Left ventricle myocardium inferior (tissue), 1 donor: ENCODE measurements at regions of chr10 and their contacts with region 1.

Region 1: GRCh38 chr10:5442065-5442989 is 30.0 kb downstream of the NET1 start:
- DNase-seq: no peak
- H3K4me3 ChIP-seq: no peak overlapping the region
- H3K27ac ChIP-seq: no peak overlapping the region
- H3K4me1 ChIP-seq: peaks cover 9% of the 10 kb centered on the region
- H3K27me3 ChIP-seq: no peaks in the 10 kb centered on the region
- CTCF ChIP-seq: peak; percentile 84

Region 2: DNA sequence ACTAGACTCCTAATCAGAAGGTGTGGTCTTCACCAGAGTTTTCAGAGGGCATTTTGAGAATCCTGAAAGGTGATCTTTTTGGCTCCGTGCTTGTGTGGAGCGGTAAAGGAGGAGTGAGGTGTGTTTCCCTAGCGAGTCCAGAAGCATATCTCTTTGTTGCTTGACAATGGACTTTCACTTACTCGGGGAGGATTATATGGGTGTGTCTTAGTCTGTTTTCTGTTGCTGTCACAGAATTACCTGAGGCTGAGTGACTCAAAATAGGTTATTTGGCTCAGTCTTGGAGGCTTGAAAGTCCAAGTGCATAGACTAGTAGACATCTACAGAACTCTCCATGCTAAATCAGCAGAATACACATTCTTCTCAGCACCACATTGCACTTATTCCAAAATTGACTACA is 187.8 kb before region 1 on chr10:
- intact Hi-C with region 1: no loop called
- DNase-seq: no peak
- H3K4me3 ChIP-seq: no peak overlapping the region
- H3K27ac ChIP-seq: no peak overlapping the region
- H3K4me1 ChIP-seq: no peaks in the 10 kb centered on the region
- H3K27me3 ChIP-seq: peaks cover 7% of the 10 kb centered on the region
- CTCF ChIP-seq: no peak

Region 3: GRCh38 chr10:5364890-5365338 is 77.4 kb before region 1 on chr10 and contains the start of gene UCN3:
- intact Hi-C with region 1: no loop called
- DNase-seq: no peak
- H3K4me3 ChIP-seq: no peak within 1 kb of the TSS
- H3K27ac ChIP-seq: no peak within 1 kb of the TSS
- H3K4me1 ChIP-seq: no peaks in the 10 kb centered on the region
- H3K27me3 ChIP-seq: peaks cover 65% of the 10 kb centered on the region
- CTCF ChIP-seq: no peak
- total RNA-seq, gene UCN3: not detected

Region 4: GRCh38 chr10:5525561-5526341 is 83.4 kb after region 1 on chr10:
- intact Hi-C with region 1: no loop called
- DNase-seq: no peak
- H3K4me3 ChIP-seq: no peak overlapping the region
- H3K27ac ChIP-seq: no peak overlapping the region
- H3K4me1 ChIP-seq: no peaks in the 10 kb centered on the region
- H3K27me3 ChIP-seq: no peaks in the 10 kb centered on the region
- CTCF ChIP-seq: no peak

Region 5: DNA sequence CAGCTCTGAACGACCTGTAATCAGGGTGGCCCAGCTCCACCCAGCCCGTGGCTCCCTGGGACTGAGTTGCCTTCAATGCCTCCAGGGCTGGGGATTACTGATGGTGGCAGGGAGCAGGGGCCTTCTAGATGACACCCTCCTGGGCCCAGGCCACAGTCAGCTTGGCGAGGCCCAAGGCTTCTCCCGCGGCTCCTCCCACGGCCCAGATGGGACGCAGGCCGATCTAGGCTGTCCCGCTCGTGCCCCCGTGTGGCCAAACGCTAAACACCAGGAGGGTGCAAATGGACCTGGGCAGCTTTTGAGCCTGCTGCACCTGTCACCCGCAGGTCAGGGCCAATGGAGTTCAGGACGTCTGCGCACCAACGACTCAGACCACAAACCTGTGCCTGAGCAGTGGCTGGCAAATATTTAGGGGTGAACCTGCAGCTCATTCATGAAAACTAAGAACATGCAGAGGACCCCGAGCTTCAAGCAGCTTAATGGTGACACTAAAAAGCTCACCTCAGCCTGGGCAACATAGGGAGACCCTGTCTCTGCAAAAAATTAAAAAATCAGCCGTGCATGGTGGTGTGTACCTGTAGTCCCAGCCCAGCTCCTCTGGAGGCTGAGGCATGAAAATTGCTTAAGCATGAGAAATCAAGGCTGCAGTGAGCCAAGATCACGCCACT is 180.9 kb after region 1 on chr10:
- intact Hi-C with region 1: loop called (anchors 2 kb)
- DNase-seq: peak; percentile 89
- H3K4me3 ChIP-seq: no peak overlapping the region
- H3K27ac ChIP-seq: peak overlapping the region; percentile 13
- H3K4me1 ChIP-seq: peaks cover 12% of the 10 kb centered on the region
- H3K27me3 ChIP-seq: no peaks in the 10 kb centered on the region
- CTCF ChIP-seq: peak; percentile 93